Activated CD8-positive, alpha-beta T cell treated with anti-CD3 and anti-CD28 coated beads for 36 hours (primary cell): ENCODE measurements at regions of chr6 and their contacts with region 1.

Region 1: GRCh38 chr6:30769088-30769852 is 24.9 kb upstream of the IER3 start:
- DNase-seq: peak; percentile 97
- ATAC-seq: peak; percentile 70
- H3K4me3 Mint-ChIP-seq: peak overlapping the region; percentile 75
- H3K27ac Mint-ChIP-seq: peak overlapping the region; percentile 99
- H3K4me1 Mint-ChIP-seq: peaks cover 82% of the 10 kb centered on the region
- H3K27me3 Mint-ChIP-seq: no peaks in the 10 kb centered on the region
- CTCF ChIP-seq: no peak

Region 2: DNA sequence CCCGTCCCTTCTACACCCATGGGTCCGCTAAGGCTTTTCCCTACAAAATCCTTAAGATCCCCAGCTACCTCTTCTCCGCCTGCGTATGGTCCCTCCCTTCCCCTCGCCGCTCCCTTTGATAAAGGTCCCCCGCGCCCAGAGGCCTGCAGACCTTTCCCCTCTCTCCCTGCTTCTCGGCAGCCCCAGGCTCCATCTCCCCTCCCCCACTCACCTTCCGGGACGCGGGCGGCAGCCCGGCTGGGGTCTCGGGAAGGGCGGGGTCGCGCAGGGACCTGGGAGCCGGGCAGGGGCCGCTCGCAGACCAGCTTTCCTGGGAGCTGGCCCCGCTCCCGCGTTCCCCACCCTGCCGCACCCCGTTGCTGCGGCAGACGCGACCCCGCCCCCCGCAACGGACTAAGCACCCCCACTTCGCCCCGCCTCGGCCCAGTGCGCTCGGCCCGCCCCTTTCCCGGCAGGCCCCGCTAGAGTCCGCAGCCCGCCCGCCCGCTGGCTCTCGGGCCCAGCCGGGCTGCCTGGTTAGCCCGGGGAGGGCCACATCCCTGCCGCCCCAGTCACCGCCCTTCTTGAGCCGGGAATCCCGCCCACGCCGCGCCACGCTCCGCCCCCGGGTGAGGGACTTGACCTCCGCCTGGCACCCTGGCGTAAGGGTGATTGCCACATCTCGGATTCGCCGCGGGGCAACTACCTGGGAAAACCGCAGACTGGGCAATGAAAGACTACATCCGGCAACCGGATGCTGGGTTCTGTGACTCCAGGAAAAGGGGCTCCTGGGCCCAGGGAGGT is 26.8 kb before region 1 on chr6 and contains the start of gene FLOT1:
- CTCF ChIA-PET with region 1: interaction called, 7 read pairs
- POLR2A ChIA-PET with region 1: interaction called, 198 read pairs
- intact Hi-C with region 1: loop called (anchors 2 kb)
- DNase-seq: peak; percentile 99
- ATAC-seq: peak; percentile 77
- H3K4me3 Mint-ChIP-seq: peak within 1 kb of the TSS; percentile 99
- H3K27ac Mint-ChIP-seq: peak within 1 kb of the TSS; percentile 94
- H3K4me1 Mint-ChIP-seq: peaks cover 67% of the 10 kb centered on the region
- H3K27me3 Mint-ChIP-seq: no peaks in the 10 kb centered on the region
- CTCF ChIP-seq: no peak
- total RNA-seq, gene FLOT1: 135 TPM

Region 3: DNA sequence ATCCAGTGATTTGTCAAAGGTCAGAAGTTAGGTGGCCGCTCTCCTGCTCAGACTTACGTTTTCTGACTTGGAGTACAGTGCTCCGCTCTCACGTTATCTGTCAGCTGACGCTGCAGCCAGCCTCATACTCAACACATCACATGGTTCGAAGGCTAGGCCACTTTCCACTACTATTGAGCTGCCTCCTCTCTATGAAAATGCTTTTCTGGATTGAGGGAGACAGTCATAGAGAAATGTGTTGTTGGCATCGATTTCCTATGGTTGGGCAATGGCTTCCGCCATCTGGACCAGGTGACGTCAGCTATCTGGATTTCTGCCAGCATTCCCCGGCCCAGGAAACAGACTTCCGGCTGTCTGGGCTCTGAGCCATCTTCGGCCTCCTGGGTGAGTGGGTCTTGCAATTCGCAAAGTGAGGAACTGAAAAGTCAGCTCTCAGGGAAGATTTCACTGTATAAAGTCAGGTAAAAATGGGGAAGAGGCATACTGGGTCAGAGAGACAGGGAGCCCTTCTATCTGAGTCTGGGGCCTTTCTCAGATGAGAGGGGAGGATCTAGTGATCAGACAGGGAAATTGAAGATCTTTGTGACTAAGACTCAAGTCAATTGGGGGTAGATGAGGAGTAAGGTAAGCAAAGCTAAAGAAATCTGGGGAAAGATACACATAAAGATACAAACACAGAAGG is 12.6 kb after region 1 on chr6:
- CTCF ChIA-PET with region 1: interaction called, 8 read pairs
- POLR2A ChIA-PET with region 1: interaction called, 162 read pairs
- intact Hi-C with region 1: no loop called
- DNase-seq: no peak
- ATAC-seq: peak; percentile 8
- H3K4me3 Mint-ChIP-seq: peak overlapping the region; percentile 44
- H3K27ac Mint-ChIP-seq: peak overlapping the region; percentile 85
- H3K4me1 Mint-ChIP-seq: peaks cover 72% of the 10 kb centered on the region
- H3K27me3 Mint-ChIP-seq: no peaks in the 10 kb centered on the region
- CTCF ChIP-seq: no peak

Region 4: GRCh38 chr6:30793521-30794194 is 24.4 kb after region 1 on chr6:
- CTCF ChIA-PET with region 1: interaction called, 6 read pairs
- POLR2A ChIA-PET with region 1: interaction called, 162 read pairs
- intact Hi-C with region 1: loop called (anchors 1 kb)
- DNase-seq: no peak
- ATAC-seq: peak; percentile 63
- H3K4me3 Mint-ChIP-seq: peak overlapping the region; percentile 68
- H3K27ac Mint-ChIP-seq: peak overlapping the region; percentile 94
- H3K4me1 Mint-ChIP-seq: peaks cover 72% of the 10 kb centered on the region
- H3K27me3 Mint-ChIP-seq: no peaks in the 10 kb centered on the region
- CTCF ChIP-seq: no peak